ENCODE measurements at regions of chr11 and their contacts with region 1.

Region 1: DNA sequence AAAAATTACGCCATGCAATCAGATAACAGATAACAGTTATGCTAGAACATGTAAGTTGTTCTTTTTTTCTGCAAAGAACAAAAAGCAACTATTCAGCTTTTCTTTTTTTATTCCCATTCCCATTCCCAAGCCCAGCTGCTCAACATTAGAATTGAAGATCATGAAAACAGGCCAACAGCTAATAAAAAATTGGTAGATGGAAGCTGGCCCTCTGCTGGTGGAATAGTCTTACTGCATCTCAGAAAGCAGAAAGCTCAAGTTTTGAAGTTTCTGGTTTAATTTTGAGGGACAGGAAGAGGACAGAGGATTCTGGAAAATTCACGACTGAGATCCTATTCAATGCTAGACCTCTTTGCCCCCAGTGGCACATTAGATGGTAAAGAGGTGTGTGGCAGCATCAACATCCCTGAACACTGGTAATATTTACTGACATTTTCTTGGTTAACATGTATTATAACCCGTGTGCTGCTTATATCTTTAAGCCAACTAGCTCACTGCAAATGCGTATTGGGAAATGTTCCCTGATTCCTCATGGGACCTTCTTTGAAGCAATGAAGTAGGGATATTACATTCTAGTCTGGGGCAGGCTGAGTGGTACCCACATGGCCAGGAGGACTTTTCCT is 591.2 kb downstream of the OPCML start:
- DNase-seq: peak; percentile 21
- ATAC-seq: no peak
- H3K4me3 Mint-ChIP-seq: no peak overlapping the region
- H3K27ac Mint-ChIP-seq: no peak overlapping the region
- H3K4me1 Mint-ChIP-seq: peaks cover 2% of the 10 kb centered on the region
- H3K27me3 Mint-ChIP-seq: peaks cover 23% of the 10 kb centered on the region

Region 2: DNA sequence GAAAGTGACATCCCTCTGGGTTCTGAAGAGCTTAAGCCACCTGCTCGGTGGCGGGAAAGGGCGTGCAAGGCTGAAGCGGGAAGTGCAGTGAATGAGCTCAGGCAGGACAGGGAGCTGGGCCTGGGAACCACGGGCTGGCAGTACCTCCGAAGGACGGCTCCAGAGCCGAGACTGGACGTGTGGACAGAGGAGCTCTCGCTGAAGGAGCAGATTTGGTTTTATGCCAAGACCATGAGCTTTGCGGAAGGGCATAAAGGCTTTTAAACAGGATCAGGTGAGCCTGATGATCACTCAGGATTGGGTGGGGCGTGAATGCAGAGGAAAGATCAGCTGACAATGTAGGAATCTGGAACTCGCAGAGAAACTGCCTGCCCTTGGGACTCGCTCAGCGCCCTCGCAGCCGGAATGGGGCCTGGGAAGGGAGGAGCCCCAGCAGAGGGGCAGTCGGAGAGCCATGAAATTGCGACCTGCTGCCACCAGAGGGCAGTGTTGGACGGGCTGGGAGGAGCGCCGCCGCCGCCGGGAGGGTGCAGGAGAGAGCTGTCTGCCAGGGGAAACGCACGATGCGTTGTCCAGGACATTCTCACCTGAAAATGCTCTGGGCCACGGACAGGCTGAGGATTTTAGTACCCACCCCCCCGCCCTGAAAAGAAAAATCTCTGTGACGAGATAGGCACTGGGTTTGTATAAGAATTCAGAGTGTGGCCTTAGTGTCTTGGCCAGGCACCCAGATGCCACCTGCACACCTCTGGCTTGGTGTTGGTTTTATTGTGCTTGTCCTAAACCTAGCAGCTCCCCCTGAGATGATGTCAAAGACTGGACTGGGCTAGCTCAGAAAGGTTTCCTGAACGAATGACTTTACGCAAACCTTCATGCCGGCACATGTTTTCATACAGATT is 1246.4 kb before region 1 on chr11:
- CTCF ChIA-PET with region 1: interaction called, 3 read pairs
- POLR2A ChIA-PET with region 1: no interaction called
- intact Hi-C with region 1: loop called in 1 of 2 experiments (anchors 5 kb)
- DNase-seq: peak; percentile 85
- ATAC-seq: peak; percentile 68
- H3K4me3 Mint-ChIP-seq: no peak overlapping the region
- H3K27ac Mint-ChIP-seq: no peak overlapping the region
- H3K4me1 Mint-ChIP-seq: no peaks in the 10 kb centered on the region
- H3K27me3 Mint-ChIP-seq: peaks cover 29% of the 10 kb centered on the region

Region 3: DNA sequence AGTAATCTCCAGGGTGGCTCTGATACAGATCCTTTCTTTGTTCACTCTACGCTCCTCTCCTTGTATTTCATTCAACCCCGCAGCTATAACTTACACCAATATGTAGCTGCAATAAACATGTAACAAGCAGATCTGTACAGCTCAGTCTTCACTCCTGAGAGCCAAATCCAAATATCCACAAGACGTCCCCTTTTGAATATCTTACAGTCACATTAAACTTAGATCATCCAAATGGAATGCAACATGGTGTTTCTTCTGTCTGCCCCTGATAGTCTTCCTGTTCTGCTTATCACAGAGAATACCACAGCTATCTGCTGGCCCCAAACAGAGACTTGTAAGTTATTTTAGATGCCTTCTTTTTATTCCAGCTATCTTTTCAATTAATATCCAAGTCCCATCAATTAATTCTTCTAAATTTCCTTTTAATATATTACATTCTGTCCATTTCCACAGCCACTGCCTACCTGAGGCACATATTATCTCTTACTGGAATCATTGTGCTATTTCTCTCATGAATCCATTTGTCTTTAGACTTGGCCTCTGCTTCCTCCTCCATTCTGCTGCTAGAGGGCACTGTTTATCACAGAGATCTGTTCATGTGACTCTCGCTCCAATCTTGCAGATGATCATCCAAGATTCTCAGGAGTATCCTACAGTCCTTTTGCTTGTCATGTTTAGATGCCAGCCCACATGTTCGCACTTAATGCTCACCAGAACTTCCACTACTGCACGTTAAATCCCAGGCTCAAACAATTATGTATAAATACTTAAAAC is 662.1 kb before region 1 on chr11:
- CTCF ChIA-PET with region 1: interaction called, 3 read pairs
- POLR2A ChIA-PET with region 1: no interaction called
- intact Hi-C with region 1: loop called (anchors 1 to 2 kb)
- DNase-seq: no peak
- ATAC-seq: no peak
- H3K4me3 Mint-ChIP-seq: no peak overlapping the region
- H3K27ac Mint-ChIP-seq: no peak overlapping the region
- H3K4me1 Mint-ChIP-seq: no peaks in the 10 kb centered on the region
- H3K27me3 Mint-ChIP-seq: no peaks in the 10 kb centered on the region

Region 4: GRCh38 chr11:132486060-132486459 is 455.1 kb before region 1 on chr11:
- CTCF ChIA-PET with region 1: no interaction called
- POLR2A ChIA-PET with region 1: no interaction called
- intact Hi-C with region 1: no loop called
- DNase-seq: no peak
- ATAC-seq: no peak
- H3K4me3 Mint-ChIP-seq: no peak overlapping the region
- H3K27ac Mint-ChIP-seq: no peak overlapping the region
- H3K4me1 Mint-ChIP-seq: no peaks in the 10 kb centered on the region
- H3K27me3 Mint-ChIP-seq: no peaks in the 10 kb centered on the region

Region 5: DNA sequence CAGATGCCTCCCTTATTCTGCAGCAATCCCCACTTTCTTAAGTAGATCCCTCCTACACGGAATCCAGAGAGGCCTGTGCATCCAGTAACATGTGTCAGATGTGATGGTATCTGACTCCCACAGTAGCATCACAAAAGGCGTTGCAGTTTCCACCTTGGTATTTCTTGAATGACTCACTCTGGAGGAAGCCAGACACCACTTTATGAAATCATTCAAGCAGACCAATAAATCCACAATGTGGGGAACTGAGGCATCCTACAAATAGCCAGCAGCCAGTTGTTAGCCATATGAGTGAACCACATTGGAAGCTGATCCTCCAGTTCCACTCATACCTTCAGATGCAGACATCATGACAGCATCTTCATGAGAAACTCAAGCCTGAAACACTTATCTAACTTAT is 206.9 kb before region 1 on chr11:
- CTCF ChIA-PET with region 1: no interaction called
- POLR2A ChIA-PET with region 1: no interaction called
- intact Hi-C with region 1: no loop called
- DNase-seq: peak; percentile 9
- ATAC-seq: peak; percentile 51
- H3K4me3 Mint-ChIP-seq: no peak overlapping the region
- H3K27ac Mint-ChIP-seq: no peak overlapping the region
- H3K4me1 Mint-ChIP-seq: no peaks in the 10 kb centered on the region
- H3K27me3 Mint-ChIP-seq: no peaks in the 10 kb centered on the region

Region 6: DNA sequence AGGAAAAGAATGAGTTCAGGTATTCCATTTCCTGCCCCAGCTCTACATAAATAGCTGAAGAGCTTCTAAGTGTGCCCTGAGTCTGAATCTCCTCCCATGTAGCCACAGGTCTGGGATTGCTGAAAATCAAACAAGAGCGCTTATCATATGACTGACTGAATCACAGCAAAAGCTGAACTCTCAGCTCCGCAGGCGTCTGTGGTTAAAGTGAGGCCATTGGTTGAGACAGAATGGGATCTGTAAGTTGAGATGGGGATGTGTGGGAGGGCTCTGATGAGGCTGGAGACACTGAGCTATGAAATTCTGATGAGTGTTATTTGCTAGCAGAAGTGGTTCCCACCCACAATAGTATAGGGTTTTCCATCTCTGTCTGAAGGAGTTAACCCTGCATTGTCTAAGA is 45.8 kb before region 1 on chr11:
- CTCF ChIA-PET with region 1: no interaction called
- POLR2A ChIA-PET with region 1: no interaction called
- intact Hi-C with region 1: no loop called
- DNase-seq: no peak
- ATAC-seq: no peak
- H3K4me3 Mint-ChIP-seq: no peak overlapping the region
- H3K27ac Mint-ChIP-seq: no peak overlapping the region
- H3K4me1 Mint-ChIP-seq: no peaks in the 10 kb centered on the region
- H3K27me3 Mint-ChIP-seq: no peaks in the 10 kb centered on the region

Region 7: GRCh38 chr11:134024420-134025081 is 1083.4 kb after region 1 on chr11:
- CTCF ChIA-PET with region 1: no interaction called
- POLR2A ChIA-PET with region 1: no interaction called
- intact Hi-C with region 1: no loop called
- DNase-seq: peak; percentile 72
- ATAC-seq: peak; percentile 88
- H3K4me3 Mint-ChIP-seq: no peak overlapping the region
- H3K27ac Mint-ChIP-seq: no peak overlapping the region
- H3K4me1 Mint-ChIP-seq: peaks cover 27% of the 10 kb centered on the region
- H3K27me3 Mint-ChIP-seq: peaks cover 5% of the 10 kb centered on the region